Activated CD4-positive, alpha-beta T cell treated with anti-CD3 and anti-CD28 coated beads, Interleukin-2, amount 10 ng/mL, durations not matched to agents 24 days and 14 days (primary cell): ENCODE measurements at regions of chr1 and their contacts with region 1.

Region 1: DNA sequence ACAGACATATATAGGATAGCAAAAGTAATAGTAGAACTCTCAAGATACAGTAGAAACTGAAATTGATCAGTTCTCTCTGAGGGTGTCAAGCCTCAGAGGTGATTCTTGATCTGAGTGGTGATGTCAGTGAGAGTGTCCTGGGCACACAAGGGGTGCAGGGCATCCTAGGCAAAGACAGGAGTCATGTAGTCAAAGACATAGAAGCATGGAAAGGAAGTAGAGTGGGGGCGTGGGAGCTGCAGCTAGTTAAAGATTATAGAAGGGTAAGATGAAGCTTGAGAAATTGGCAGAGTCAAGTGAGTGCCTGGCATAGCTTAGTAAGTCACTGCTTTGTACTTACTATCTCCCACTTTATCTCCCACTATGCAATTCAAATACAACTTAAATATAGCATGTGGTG is 22.8 kb downstream of the CDC7 start:
- DNase-seq: peak; percentile 71
- H3K4me3 Mint-ChIP-seq: no peak overlapping the region
- H3K27ac Mint-ChIP-seq: peak overlapping the region; percentile 22
- H3K4me1 Mint-ChIP-seq: peaks cover 28% of the 10 kb centered on the region
- H3K27me3 Mint-ChIP-seq: no peaks in the 10 kb centered on the region

Region 2: DNA sequence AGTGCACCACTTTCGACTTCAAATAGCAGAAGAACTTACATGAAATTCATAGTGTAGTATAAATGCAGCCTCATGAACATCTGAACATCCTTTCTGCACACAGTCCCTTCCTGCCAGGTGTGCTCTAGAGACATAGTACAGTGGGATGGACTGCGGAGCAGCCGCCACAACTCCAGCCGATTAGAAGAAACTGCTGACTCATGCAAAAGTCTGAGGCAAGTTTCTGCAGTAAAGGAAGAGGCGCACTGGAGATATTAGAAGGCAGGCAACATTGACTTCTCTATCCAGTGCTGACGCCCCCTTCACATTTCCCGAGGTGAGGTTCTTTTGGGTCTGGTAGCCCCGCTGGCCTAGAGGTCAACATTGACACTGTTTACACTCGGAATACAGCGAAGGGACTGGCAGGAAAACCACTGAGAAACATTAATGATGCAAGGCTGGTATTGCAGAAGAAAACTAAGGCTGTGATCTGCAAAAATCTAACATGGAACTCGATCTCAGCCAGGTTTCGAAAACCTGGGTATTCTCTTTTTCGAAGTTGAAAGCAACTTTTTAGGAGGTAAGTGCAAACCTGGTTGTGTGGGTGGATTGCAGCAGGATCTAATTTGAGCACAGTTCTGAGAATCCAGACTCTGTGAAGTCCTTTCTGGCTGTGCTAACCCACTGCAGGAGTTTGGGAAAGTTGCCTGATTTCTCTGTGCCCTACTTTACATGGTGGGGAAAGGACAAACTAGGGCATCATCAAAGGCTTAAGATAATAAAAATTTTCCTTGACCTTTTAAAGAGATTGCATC is 67.9 kb after region 1 on chr1:
- intact Hi-C with region 1: loop called (anchors 5 kb)
- DNase-seq: peak; percentile 66
- H3K4me3 Mint-ChIP-seq: peak overlapping the region; percentile 76
- H3K27ac Mint-ChIP-seq: peak overlapping the region; percentile 85
- H3K4me1 Mint-ChIP-seq: peaks cover 29% of the 10 kb centered on the region
- H3K27me3 Mint-ChIP-seq: peaks cover 2% of the 10 kb centered on the region

Region 3: GRCh38 chr1:91673613-91674012 is 150.1 kb after region 1 on chr1:
- intact Hi-C with region 1: loop called (anchors 5 kb)
- DNase-seq: no peak
- H3K4me3 Mint-ChIP-seq: no peak overlapping the region
- H3K27ac Mint-ChIP-seq: peak overlapping the region; percentile 88
- H3K4me1 Mint-ChIP-seq: peaks cover 33% of the 10 kb centered on the region
- H3K27me3 Mint-ChIP-seq: no peaks in the 10 kb centered on the region

Region 4: GRCh38 chr1:91697416-91697815 is 173.9 kb after region 1 on chr1:
- intact Hi-C with region 1: loop called (anchors 5 kb)
- DNase-seq: peak; percentile 90
- H3K4me3 Mint-ChIP-seq: peak overlapping the region; percentile 74
- H3K27ac Mint-ChIP-seq: peak overlapping the region; percentile 76
- H3K4me1 Mint-ChIP-seq: peaks cover 30% of the 10 kb centered on the region
- H3K27me3 Mint-ChIP-seq: no peaks in the 10 kb centered on the region

Region 5: GRCh38 chr1:91732291-91733107 is 209.0 kb after region 1 on chr1:
- intact Hi-C with region 1: loop called (anchors 5 kb)
- DNase-seq: no peak
- H3K4me3 Mint-ChIP-seq: peak overlapping the region; percentile 17
- H3K27ac Mint-ChIP-seq: peak overlapping the region; percentile 69
- H3K4me1 Mint-ChIP-seq: peaks cover 45% of the 10 kb centered on the region
- H3K27me3 Mint-ChIP-seq: peaks cover 2% of the 10 kb centered on the region

Region 6: DNA sequence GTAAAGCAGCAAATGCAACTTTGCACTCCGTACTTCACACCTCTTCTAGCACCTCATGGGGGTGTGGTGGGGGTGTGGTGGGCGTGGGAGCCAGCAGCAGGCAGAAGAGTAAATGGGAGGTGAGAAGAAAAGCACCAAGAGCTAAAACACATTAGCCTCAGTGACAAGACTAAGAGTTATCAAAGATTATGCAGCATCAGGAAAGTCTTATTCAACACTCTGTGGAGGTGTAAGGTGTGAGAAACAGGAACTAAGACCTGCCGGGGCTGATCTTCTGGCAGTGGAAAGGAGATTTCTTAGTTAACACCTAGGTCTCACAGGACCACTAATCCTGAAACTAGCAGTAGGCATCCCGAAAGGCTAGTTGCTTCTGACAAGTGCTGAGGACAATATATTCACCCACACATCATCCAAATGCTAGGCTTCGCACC is 352.6 kb after region 1 on chr1:
- intact Hi-C with region 1: loop called (anchors 2 kb)
- DNase-seq: no peak
- H3K4me3 Mint-ChIP-seq: peak overlapping the region; percentile 44
- H3K27ac Mint-ChIP-seq: peak overlapping the region; percentile 13
- H3K4me1 Mint-ChIP-seq: peaks cover 58% of the 10 kb centered on the region
- H3K27me3 Mint-ChIP-seq: peaks cover 12% of the 10 kb centered on the region